OCI-LY7 (cell line): ENCODE measurements at regions of chr18 and their contacts with region 1.

Region 1: DNA sequence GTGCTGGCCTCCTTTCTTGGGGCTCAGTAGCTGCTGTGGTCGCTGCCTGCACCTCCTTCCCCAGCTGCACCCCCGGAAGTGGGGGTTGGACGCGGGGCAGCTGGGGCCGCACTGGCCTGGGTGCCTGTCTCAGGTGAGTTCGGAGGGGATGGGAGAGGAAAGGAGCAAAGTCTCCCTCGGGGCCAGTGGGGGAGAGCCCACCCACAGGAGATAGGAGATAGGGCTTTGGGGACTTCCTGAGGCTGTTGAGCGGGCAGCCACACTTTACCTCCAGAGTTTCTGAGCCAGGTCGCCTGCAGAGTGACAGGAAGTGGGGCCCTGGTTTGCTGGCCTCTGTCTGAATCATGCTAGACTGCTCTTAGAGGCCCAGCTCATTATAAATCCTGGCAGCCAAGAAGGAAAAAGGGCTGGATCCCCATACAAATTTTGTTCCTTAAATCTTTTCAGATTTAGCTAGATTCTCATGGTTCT is 8.1 kb downstream of the MBP start:
- DNase-seq: peak; percentile 49
- H3K4me3 ChIP-seq: peak overlapping the region; percentile 57
- H3K27ac ChIP-seq: peak overlapping the region; percentile 69
- H3K4me1 ChIP-seq: peaks cover 92% of the 10 kb centered on the region
- CTCF ChIP-seq: no peak

Region 2: DNA sequence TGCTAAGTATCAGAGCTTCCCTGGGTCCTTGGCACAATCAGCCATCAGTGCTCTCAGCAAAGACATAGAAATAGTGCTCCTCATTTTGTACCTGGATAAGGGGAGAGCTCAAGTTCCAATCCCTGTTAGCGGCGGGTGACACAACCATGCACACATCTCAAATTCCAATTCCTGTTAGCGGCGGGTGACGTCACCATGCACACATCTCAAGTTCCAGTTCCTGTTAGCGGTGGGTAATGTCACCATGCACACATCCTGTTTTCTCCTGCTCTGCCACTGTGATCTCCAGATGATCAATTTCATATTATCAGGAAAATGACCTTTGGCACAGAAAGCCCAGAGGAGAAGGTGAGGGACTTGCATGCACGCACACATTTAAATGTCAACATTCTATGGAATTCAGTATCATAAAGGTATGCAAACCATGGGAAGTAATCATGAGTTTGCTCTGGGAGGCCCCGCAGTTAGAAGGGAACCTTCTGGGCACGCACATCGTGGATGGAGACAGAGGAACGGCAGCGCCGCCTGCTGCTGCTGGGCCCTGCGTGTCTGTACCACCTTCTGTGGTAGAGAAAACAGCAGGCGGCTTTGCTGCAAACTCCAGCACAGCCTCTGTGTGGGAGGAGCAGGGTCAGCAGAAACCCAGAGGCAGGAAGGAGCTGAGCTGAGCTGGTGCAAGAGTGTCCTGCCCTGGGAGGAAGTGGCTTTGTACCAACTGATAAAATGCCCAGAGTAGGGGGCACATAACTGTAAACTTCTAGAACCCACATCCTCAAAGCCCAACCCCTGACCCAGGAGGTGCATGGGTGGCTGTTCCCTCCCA is 69.7 kb before region 1 on chr18:
- CTCF ChIA-PET with region 1: no interaction called
- POLR2A ChIA-PET with region 1: interaction called, 5 read pairs
- intact Hi-C with region 1: loop called (anchors 2 kb)
- DNase-seq: peak; percentile 83
- H3K4me3 ChIP-seq: peak overlapping the region; percentile 49
- H3K27ac ChIP-seq: peak overlapping the region; percentile 87
- H3K4me1 ChIP-seq: peaks cover 69% of the 10 kb centered on the region
- CTCF ChIP-seq: peak; percentile 73

Region 3: GRCh38 chr18:77108001-77108692 is 16.3 kb before region 1 on chr18:
- CTCF ChIA-PET with region 1: no interaction called
- POLR2A ChIA-PET with region 1: interaction called, 12 read pairs
- intact Hi-C with region 1: no loop called
- DNase-seq: peak; percentile 29
- H3K4me3 ChIP-seq: peak overlapping the region; percentile 8
- H3K27ac ChIP-seq: peak overlapping the region; percentile 22
- H3K4me1 ChIP-seq: peaks cover 48% of the 10 kb centered on the region
- CTCF ChIP-seq: no peak

Region 4: DNA sequence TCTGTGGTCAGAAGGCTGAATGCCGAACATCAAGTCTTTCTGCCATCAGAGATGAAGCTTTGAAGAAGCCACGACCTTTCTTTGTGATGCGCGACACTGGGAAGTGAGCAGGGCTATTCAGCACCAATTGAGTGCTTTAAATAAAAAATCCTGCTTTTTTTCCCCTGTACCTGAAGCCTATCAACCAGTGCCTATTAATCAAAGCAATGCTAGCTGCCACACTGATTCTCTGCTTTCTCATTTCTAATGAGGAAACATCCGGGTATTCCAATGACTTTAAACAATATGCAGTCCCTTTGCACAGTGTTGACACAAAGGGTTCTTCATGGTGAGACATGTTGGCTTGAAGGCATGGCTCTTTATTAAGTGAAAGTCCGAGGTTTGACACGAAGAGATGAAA is 213.1 kb after region 1 on chr18:
- CTCF ChIA-PET with region 1: no interaction called
- POLR2A ChIA-PET with region 1: no interaction called
- intact Hi-C with region 1: no loop called
- DNase-seq: no peak
- H3K4me3 ChIP-seq: no peak overlapping the region
- H3K27ac ChIP-seq: no peak overlapping the region
- H3K4me1 ChIP-seq: no peaks in the 10 kb centered on the region
- CTCF ChIP-seq: no peak